Ovary (tissue), 10 donors: ENCODE measurements at regions of chr9 and their contacts with region 1.

Region 1: GRCh38 chr9:96619491-96620154 is at the start of gene CDC14B:
- DNase-seq: peak; percentile 80 to 88 (median 85)
- H3K4me3 ChIP-seq: peak within 1 kb of the TSS; percentile 55
- H3K27ac ChIP-seq: no peak within 1 kb of the TSS
- H3K4me1 ChIP-seq: no peaks in the 10 kb centered on the region
- H3K27me3 ChIP-seq: no peaks in the 10 kb centered on the region
- CTCF ChIP-seq: peak in 2 of 3 donors; percentile 10 to 24
- EP300 ChIP-seq: no peak
- POLR2A ChIP-seq: no peak
- total RNA-seq, gene CDC14B: 8.1 to 15.3 (median 11.4) TPM

Region 2: GRCh38 chr9:96317335-96317980 is 302.2 kb before region 1 on chr9:
- intact Hi-C with region 1: no loop called
- DNase-seq: peak in 4 of 5 donors; percentile 33 to 75 (median 62)
- H3K4me3 ChIP-seq: no peak overlapping the region
- H3K27ac ChIP-seq: no peak overlapping the region
- H3K4me1 ChIP-seq: no peaks in the 10 kb centered on the region
- H3K27me3 ChIP-seq: no peaks in the 10 kb centered on the region
- CTCF ChIP-seq: peak; percentile 36 to 88 (median 77)
- EP300 ChIP-seq: no peak
- POLR2A ChIP-seq: no peak

Region 3: DNA sequence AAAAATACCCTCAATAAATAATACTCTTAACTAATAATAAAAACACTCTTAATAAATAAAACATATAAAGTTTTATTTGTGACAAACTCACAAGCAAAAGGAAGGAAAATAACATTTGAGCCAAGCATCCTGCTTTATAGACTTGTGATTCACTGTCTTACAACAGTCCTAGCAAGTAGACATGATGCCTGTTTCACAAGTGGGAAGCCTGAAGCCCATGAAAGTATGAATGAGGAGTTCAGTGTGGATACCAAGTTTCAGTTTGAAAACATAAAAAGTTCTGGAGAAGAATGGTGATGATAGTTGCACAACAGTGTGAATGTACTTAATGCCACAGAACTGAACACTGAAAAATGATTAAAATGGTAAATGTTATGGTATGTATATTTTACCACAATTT is 158.7 kb before region 1 on chr9:
- intact Hi-C with region 1: loop called in 1 of 4 experiments (anchors 10 kb)
- DNase-seq: no peak
- H3K4me3 ChIP-seq: no peak overlapping the region
- H3K27ac ChIP-seq: no peak overlapping the region
- H3K4me1 ChIP-seq: no peaks in the 10 kb centered on the region
- H3K27me3 ChIP-seq: no peaks in the 10 kb centered on the region
- CTCF ChIP-seq: no peak
- EP300 ChIP-seq: no peak
- POLR2A ChIP-seq: no peak

Region 4: GRCh38 chr9:96719921-96720320 is 100.3 kb after region 1 on chr9:
- intact Hi-C with region 1: no loop called
- DNase-seq: peak in 1 of 5 donors; percentile 21
- H3K4me3 ChIP-seq: no peak overlapping the region
- H3K27ac ChIP-seq: no peak overlapping the region
- H3K4me1 ChIP-seq: peaks cover 2% of the 10 kb centered on the region
- H3K27me3 ChIP-seq: no peaks in the 10 kb centered on the region
- CTCF ChIP-seq: no peak
- EP300 ChIP-seq: no peak
- POLR2A ChIP-seq: no peak

Region 5: GRCh38 chr9:97617939-97618416 is 998.4 kb after region 1 on chr9:
- intact Hi-C with region 1: no loop called
- DNase-seq: no peak
- H3K4me3 ChIP-seq: no peak overlapping the region
- H3K27ac ChIP-seq: no peak overlapping the region
- H3K4me1 ChIP-seq: no peaks in the 10 kb centered on the region
- H3K27me3 ChIP-seq: no peaks in the 10 kb centered on the region
- CTCF ChIP-seq: no peak
- EP300 ChIP-seq: no peak
- POLR2A ChIP-seq: no peak